ENCODE measurements at regions of chr18 and their contacts with region 1.

Region 1: DNA sequence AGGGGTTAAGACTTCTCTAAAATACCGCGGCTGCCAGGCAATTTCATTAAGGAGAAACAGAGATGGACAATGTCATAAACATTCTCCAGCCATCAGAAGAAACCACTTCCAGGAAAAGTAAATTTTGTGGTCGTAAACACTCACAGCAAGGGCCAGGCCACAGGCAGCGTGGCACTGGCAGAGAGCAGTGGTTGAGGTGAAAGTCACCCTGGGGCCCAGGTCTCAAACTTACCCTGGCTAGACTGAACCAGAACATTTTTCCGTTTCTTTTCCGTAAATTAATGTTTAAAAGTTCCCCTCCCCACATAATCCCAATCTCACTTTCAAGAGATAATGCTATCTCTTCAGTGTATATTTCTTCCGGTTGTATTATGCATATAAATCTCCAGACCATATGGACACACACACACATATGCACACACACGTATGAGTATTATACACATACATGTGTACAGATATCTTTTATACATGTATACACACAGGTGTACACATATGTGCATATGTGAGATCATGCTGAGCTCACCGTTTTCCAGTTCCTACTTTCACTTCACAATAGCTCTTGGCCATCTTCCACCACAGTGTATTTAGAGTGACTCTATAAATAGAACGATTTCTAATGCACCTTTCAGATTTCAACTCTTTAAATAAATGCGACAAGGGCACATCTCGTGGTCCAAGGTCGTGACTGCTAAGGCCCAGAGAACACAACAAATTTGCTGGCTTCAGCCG is 90.1 kb downstream of the MALT1 start:
- DNase-seq: no peak
- ATAC-seq: peak; percentile 43
- H3K4me3 Mint-ChIP-seq: no peak overlapping the region
- H3K27ac Mint-ChIP-seq: peak overlapping the region; percentile 20
- H3K4me1 Mint-ChIP-seq: peaks cover 27% of the 10 kb centered on the region
- H3K27me3 Mint-ChIP-seq: peaks cover 6% of the 10 kb centered on the region
- CTCF ChIP-seq: no peak

Region 2: DNA sequence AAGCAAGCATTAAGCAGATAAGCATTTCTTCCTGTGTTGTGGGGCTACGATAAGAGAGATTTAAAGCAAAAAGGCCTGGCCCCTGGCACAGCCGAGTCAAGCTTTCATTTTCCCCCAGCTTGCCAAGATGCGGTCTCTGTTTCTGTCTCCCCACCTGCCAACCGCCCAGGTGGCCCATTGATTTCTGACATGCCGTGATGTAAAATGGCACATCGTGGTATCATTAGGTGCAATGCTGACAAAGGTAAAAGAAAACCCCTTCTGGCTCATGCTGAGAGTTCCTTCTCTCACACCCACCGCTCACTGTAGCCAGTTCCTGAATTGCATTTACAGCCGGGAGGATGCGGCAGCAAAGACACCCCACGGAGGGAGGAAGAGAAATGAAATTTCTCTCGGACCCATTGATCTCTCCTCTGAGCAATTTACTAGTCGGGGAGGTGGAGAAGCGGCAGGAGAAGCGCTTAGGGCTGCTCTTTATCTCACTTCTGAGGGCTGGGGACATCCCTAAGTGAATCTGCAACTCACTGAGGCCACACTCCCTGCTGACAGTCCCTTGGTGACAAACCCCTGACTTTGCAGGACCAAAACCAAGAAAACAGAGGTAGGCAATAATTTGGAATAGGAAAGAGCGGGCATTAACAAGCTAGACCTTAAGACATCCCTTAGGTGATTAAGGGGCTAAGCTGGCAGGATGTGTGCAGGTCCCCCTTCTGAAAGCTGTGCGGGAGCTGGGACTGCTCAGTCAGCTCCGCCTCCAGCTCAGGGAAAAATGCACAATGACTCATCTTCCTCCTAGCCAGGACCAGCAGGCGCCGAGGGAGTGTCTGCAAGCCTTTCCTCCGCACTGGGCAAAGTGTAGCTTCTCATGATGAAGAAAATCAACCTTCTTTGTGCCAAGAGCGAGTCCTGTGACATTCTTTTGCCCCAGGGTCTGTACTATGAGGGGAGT is 1551.4 kb before region 1 on chr18:
- CTCF ChIA-PET with region 1: no interaction called
- POLR2A ChIA-PET with region 1: no interaction called
- intact Hi-C with region 1: no loop called
- DNase-seq: no peak
- ATAC-seq: no peak
- H3K4me3 Mint-ChIP-seq: no peak overlapping the region
- H3K27ac Mint-ChIP-seq: no peak overlapping the region
- H3K4me1 Mint-ChIP-seq: peaks cover 2% of the 10 kb centered on the region
- H3K27me3 Mint-ChIP-seq: peaks cover 24% of the 10 kb centered on the region
- CTCF ChIP-seq: no peak

Region 3: DNA sequence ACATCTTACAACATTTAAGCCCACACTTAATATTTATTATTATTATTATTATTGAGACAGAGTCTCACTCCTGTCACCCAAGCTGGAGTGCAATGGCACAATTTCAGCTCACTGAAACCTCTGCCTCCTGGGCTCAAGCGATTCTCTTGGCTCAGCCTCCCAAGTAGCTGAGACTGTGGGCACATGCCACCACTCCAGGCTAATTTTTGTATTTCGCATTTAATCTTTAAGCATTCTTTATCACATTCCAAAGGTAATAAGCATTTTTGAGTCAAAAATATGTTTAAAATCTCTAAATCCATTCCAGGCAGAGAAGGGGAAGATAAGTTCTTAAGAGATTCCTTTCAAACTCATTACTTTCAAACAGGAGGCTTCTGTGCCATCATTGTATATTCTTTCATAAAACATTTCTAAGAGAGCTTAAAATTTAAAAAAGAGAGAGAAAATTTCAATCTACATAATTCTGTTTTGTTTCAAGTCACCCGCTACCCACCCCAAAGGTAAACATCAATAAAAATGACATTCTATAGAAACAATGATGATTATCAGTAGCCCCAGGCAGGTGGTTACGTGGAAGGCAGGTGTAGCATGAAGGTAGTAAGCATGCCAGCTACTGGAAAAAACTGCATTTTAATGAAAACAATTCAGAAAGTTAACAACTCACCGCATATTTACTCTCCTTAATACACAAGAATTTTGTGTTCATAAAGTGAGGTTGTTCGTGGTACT is 1055.4 kb before region 1 on chr18:
- CTCF ChIA-PET with region 1: no interaction called
- POLR2A ChIA-PET with region 1: no interaction called
- intact Hi-C with region 1: no loop called
- DNase-seq: no peak
- ATAC-seq: no peak
- H3K4me3 Mint-ChIP-seq: no peak overlapping the region
- H3K27ac Mint-ChIP-seq: no peak overlapping the region
- H3K4me1 Mint-ChIP-seq: peaks cover 34% of the 10 kb centered on the region
- H3K27me3 Mint-ChIP-seq: no peaks in the 10 kb centered on the region
- CTCF ChIP-seq: no peak

Region 4: GRCh38 chr18:58135701-58136331 is 625.6 kb before region 1 on chr18:
- CTCF ChIA-PET with region 1: interaction called, 5 read pairs
- POLR2A ChIA-PET with region 1: no interaction called
- intact Hi-C with region 1: loop called (anchors 5 kb)
- DNase-seq: peak; percentile 25
- ATAC-seq: peak; percentile 65
- H3K4me3 Mint-ChIP-seq: peak overlapping the region; percentile 52
- H3K27ac Mint-ChIP-seq: peak overlapping the region; percentile 3
- H3K4me1 Mint-ChIP-seq: peaks cover 33% of the 10 kb centered on the region
- H3K27me3 Mint-ChIP-seq: no peaks in the 10 kb centered on the region
- CTCF ChIP-seq: no peak

Region 5: DNA sequence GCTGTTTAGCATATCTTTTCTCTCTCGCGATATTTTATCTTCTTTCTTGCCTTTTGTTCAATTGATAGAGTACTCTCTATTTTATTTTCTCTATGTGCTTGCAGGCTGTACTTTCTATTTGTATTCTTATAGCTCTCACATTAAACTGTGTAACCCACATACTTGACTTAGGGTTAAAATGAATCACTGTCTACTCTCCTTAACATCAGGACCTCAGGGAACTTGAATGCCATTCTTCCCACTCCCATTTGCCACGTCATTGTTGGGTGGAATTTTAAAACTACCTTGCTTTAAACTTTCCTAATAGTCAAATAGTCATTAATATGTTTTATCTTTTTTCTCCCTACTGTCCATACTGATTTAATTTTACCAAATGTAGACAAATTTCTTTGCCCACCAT is 402.2 kb before region 1 on chr18:
- CTCF ChIA-PET with region 1: no interaction called
- POLR2A ChIA-PET with region 1: no interaction called
- intact Hi-C with region 1: loop called (anchors 5 kb)
- DNase-seq: no peak
- ATAC-seq: no peak
- H3K4me3 Mint-ChIP-seq: no peak overlapping the region
- H3K27ac Mint-ChIP-seq: no peak overlapping the region
- H3K4me1 Mint-ChIP-seq: no peaks in the 10 kb centered on the region
- H3K27me3 Mint-ChIP-seq: no peaks in the 10 kb centered on the region
- CTCF ChIP-seq: no peak

Region 6: GRCh38 chr18:58716060-58716756 is 45.2 kb before region 1 on chr18:
- CTCF ChIA-PET with region 1: interaction called, 7 read pairs
- POLR2A ChIA-PET with region 1: interaction called, 3 read pairs
- intact Hi-C with region 1: loop called (anchors 5 kb)
- DNase-seq: no peak
- ATAC-seq: peak; percentile 58
- H3K4me3 Mint-ChIP-seq: peak overlapping the region; percentile 29
- H3K27ac Mint-ChIP-seq: peak overlapping the region; percentile 82
- H3K4me1 Mint-ChIP-seq: peaks cover 46% of the 10 kb centered on the region
- H3K27me3 Mint-ChIP-seq: no peaks in the 10 kb centered on the region
- CTCF ChIP-seq: no peak